Motor neuron (in vitro differentiated cells): ENCODE measurements at regions of chr15 and their contacts with region 1.

Region 1: GRCh38 chr15:94882071-94882712 is 650.8 kb downstream of the MCTP2 start:
- ATAC-seq: no peak
- H3K4me3 ChIP-seq: no peak overlapping the region
- H3K27ac ChIP-seq: no peak overlapping the region
- H3K4me1 ChIP-seq: no peaks in the 10 kb centered on the region

Region 2: GRCh38 chr15:94061041-94061440 is 821.2 kb before region 1 on chr15:
- in situ Hi-C with region 1: no loop called
- ATAC-seq: no peak
- H3K4me3 ChIP-seq: no peak overlapping the region
- H3K27ac ChIP-seq: no peak overlapping the region
- H3K4me1 ChIP-seq: peaks cover 0 to 8% of the 10 kb centered on the region in 2 donors

Region 3: DNA sequence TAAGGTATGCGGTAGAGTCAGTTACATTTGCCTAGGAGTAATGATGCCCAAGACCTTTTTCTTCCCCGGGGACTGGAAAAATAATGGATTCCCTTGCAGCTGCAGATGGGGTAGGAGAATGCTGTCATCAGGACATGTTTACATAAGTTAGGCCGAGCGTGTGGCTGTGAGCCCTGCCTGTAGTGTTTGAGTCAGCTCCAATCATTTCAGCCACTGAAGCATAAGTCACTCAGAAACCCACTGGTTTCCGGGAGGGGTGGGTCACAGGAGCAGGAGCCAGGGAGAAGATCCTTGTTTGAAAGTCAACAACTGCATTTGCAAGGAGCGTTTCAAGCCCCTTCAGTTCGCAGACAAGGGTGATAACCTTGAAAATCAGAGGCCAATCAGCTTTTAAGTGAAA is 88.6 kb before region 1 on chr15:
- in situ Hi-C with region 1: loop called in 1 of 9 experiments (anchors 25 kb)
- ATAC-seq: peak in 6 of 8 experiments; percentile 47 to 100 (median 99)
- H3K4me3 ChIP-seq: no peak overlapping the region
- H3K27ac ChIP-seq: peak overlapping the region in 1 of 2 donors; percentile 35
- H3K4me1 ChIP-seq: peaks cover 0 to 25% of the 10 kb centered on the region in 2 donors